ENCODE measurements at regions of chr20 and their contacts with region 1.

Region 1: GRCh38 chr20:33299111-33299603 is 16.1 kb downstream of the BPIFB1 start:
- DNase-seq: peak; percentile 86

Region 2: DNA sequence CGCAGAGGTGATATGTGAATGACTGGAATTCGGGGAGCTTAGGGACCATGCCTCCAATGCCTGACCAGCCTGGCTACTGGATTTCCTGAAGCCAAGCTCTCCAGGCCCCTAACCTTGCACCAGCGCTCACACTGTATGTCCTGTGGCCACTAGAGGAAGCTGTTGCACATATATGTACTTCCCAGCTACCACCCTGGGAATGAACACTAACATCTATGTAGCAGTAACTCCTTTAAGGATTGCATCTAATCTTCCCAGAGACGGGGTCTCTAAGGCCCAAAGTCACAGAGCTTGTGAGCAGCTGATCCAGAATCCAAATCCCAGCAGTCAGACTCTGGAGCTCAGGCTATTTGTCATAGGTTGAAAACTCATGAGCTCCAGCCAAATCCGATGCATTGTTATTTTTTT is 36.5 kb before region 1 on chr20:
- CTCF ChIA-PET with region 1: interaction called, 13 read pairs
- POLR2A ChIA-PET with region 1: no interaction called
- DNase-seq: peak; percentile 53

Measured in HEK293T (cell line).